ENCODE measurements at regions of chr16 and their contacts with region 1.

Region 1: GRCh38 chr16:67226804-67227557 is at the start of gene TMEM208:
- H3K4me3 ChIP-seq: peak within 1 kb of the TSS; percentile 93
- H3K27ac ChIP-seq: no peak within 1 kb of the TSS; the same call in 1 of the 2 replicates
- H3K4me1 ChIP-seq: no peaks in the 10 kb centered on the region
- CTCF ChIP-seq: peak; percentile 83

Region 2: DNA sequence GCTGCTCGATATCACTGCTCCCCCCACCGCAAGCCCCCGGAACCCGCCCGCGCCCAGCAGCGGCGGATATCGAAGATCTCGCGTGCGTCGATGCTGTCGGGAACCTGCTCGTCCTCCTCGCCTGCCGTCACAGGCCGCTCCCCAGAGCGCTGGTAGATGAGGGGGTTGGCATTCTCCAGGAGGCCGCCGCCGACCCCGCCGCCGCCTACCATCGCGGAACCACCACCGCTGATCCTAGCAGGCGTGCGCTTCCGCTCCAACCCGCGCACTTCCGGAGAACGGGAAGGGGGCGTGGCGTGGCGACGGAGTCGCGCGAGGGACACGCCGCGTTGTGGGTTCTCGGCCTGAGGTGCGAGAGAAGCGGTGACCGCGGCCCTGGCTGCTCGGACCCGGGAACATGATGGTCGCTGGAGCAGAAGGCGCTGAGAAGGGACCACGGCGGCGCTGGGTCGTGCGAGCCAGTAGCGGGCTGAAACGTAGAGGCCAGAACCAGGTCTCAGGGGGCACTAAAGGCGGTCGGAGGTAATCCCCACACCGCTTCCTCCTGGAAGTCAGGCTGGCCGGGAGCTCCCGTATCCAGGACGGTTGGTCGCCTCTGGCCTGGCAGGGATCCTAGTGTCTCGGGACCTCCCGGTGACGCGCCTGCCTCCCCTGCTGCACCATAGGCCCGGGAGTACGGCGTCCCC is 292.7 kb before region 1 on chr16 and contains the start of gene CIAO2B:
- CTCF ChIA-PET with region 1: no interaction called
- POLR2A ChIA-PET with region 1: no interaction called
- H3K4me3 ChIP-seq: peak within 1 kb of the TSS; percentile 83
- H3K27ac ChIP-seq: peak within 1 kb of the TSS; percentile 72
- H3K4me1 ChIP-seq: peaks cover 2% of the 10 kb centered on the region; the same call in 1 of the 2 replicates
- CTCF ChIP-seq: no peak

Region 3: GRCh38 chr16:67170168-67170947 is 56.6 kb before region 1 on chr16 and contains the start of gene NOL3:
- CTCF ChIA-PET with region 1: no interaction called
- POLR2A ChIA-PET with region 1: no interaction called
- H3K4me3 ChIP-seq: peak within 1 kb of the TSS; percentile 36
- H3K27ac ChIP-seq: peak within 1 kb of the TSS; percentile 59; the same call in 1 of the 2 replicates
- H3K4me1 ChIP-seq: peaks cover 9% of the 10 kb centered on the region
- CTCF ChIP-seq: peak; percentile 43; the same call in 1 of the 2 replicates

Region 4: DNA sequence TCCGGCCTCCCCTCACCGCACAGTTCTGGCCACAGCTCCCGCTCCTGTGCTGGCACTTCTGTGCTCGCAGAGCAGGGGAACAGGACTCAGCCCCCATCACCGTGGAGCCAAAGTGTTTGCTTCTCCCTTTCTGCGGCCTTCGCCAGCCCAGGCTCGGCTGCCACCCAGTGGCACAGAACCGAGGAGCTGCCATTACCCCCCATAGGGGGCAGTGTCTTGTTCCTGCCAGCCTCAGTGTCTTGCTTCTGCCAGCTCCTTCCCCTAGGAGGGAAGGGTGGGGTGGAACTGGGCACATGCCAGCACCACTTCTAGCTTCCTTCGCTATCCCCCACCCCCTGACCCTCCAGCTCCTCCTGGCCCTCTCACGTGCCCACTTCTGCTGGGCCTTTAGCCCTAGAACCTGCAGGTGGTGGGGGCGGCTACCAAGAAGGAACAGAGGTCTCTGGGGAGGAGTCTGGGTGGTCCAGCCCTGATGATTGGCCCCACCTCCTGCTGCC is 28.7 kb before region 1 on chr16:
- CTCF ChIA-PET with region 1: interaction called, 7 read pairs
- POLR2A ChIA-PET with region 1: interaction called, 11 read pairs
- H3K4me3 ChIP-seq: no peak overlapping the region
- H3K27ac ChIP-seq: no peak overlapping the region
- H3K4me1 ChIP-seq: peaks cover 3% of the 10 kb centered on the region
- CTCF ChIP-seq: peak; percentile 98

Measured in HEK293 (cell line).